Stomach (tissue), 19 donors: ENCODE measurements at regions of chr5 and their contacts with region 1.

Region 1: DNA sequence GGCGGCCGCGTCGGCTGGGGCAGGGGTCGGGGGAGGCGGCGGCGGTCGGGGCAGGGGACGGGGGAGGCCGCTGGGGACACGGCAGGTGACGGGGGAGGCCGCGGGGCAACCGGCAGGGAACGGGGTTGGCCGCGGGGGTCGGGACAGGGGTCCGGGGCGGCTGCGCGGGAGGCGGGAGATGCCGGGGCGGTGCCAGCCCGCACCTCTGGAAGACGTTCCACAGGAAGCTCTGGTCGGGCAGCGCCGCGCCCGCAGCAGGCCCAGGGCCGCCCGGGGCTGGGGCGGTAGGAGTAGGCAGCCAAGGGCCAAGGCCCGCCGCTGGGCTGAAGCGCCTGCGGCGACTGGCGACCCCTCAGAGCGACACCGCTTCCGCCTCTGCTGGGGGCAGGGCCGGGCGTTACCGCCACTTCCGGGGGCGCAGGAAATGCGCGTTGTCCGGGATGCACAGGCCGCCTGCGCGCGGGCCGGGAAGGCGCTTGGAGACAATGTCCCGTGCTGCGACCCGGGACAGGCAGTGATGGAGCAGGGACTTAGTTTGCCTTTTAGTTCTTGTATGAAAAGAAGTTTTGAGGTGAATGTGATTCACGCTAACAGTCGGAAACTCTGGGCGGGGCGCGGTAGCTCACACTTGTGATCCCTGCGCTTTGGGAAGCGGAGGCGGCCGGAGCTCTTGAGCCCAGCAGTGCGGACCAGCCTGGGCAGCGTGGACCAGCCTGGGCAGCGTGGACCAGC is 110.0 kb upstream of the LPCAT1 start:
- DNase-seq: peak; percentile 80 to 95
- H3K4me3 ChIP-seq: peak overlapping the region; percentile 61 to 91 (median 74)
- H3K27ac ChIP-seq: peak overlapping the region; percentile 79 to 94 (median 93)
- H3K4me1 ChIP-seq: peaks cover 0 to 27% (median 18%) of the 10 kb centered on the region in 4 donors
- H3K27me3 ChIP-seq: no peaks in the 10 kb centered on the region
- CTCF ChIP-seq: no peak
- EP300 ChIP-seq: no peak
- POLR2A ChIP-seq: no peak

Region 2: GRCh38 chr5:1479581-1480188 is 154.1 kb before region 1 on chr5:
- intact Hi-C with region 1: loop called (anchors 10 kb)
- DNase-seq: peak; percentile 37 to 51
- H3K4me3 ChIP-seq: no peak overlapping the region
- H3K27ac ChIP-seq: peak overlapping the region in 4 of 5 donors; percentile 20 to 75 (median 62)
- H3K4me1 ChIP-seq: peaks cover 0 to 16% (median 11%) of the 10 kb centered on the region in 4 donors
- H3K27me3 ChIP-seq: no peaks in the 10 kb centered on the region
- CTCF ChIP-seq: peak in 4 of 7 experiments; percentile 37 to 58 (median 43)
- EP300 ChIP-seq: no peak
- POLR2A ChIP-seq: no peak

Region 3: GRCh38 chr5:2634008-2634407 is 1000.2 kb after region 1 on chr5:
- intact Hi-C with region 1: no loop called
- DNase-seq: peak in 1 of 2 donors; percentile 27
- H3K4me3 ChIP-seq: no peak overlapping the region
- H3K27ac ChIP-seq: no peak overlapping the region
- H3K4me1 ChIP-seq: no peaks in the 10 kb centered on the region
- H3K27me3 ChIP-seq: peaks cover 0 to 20% (median 0%) of the 10 kb centered on the region in 3 donors
- CTCF ChIP-seq: no peak
- EP300 ChIP-seq: no peak
- POLR2A ChIP-seq: no peak